ENCODE measurements at regions of chr1 and their contacts with region 1.

Region 1: GRCh38 chr1:2545759-2546514 is 10.2 kb upstream of the TNFRSF14 start:
- DNase-seq: peak; percentile 78
- H3K4me3 Mint-ChIP-seq: peak overlapping the region; percentile 75
- H3K27ac Mint-ChIP-seq: no peak overlapping the region
- H3K4me1 Mint-ChIP-seq: peaks cover 5% of the 10 kb centered on the region
- H3K27me3 Mint-ChIP-seq: no peaks in the 10 kb centered on the region
- CTCF ChIP-seq: no peak

Region 2: DNA sequence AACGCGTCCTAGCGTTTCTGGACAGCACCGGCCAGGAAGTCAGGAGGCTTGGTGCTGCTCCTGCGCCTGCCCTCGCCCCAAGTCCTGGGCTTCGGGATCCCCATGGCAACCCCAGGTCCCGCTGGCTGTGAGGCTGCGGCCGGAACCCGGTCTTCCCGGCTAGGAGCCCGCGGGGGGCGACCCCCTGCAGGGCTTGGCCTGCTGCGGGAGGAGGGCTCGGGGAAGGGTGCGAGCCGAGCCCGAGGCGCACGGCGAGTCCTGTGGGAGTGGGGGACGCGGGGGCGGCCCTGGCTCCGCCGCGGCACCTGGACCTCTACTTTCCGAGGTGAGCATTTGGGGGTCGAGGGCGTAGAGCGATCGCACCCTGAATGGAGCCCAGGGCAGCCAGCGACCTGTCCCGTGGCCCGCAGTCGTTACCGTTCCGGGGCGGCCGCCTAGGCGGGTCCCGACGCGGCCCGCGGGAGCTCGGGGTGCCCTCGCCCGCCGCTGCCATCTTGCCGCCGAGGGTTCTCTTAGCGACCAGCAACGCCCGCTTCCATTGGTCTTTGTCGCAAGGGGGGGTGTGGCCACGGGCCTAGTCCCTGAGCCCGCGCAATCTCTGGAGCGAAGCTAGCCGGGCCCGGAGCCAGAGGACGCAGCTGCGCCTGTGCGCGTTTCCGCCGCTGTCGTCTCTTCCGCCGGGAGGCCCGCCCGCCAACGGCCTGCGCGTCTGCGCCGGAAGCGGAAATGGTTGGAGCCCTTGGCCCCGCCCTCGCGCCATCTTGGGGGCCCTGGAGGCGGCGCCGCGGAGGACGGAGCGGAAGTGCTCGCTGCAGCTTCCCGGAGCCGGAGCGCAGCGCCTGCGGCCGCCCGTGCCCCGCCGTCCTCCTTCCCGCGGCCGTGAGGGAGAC is 154.7 kb before region 1 on chr1 and contains the starts of genes MORN1 and RER1:
- CTCF ChIA-PET with region 1: no interaction called
- POLR2A ChIA-PET with region 1: interaction called, 4 read pairs
- intact Hi-C with region 1: loop called (anchors 1 kb)
- DNase-seq: peak; percentile 98
- H3K4me3 Mint-ChIP-seq: peak within 1 kb of the TSS; percentile 66
- H3K27ac Mint-ChIP-seq: peak within 1 kb of the TSS; percentile 87
- H3K4me1 Mint-ChIP-seq: peaks cover 18% of the 10 kb centered on the region
- H3K27me3 Mint-ChIP-seq: no peaks in the 10 kb centered on the region
- CTCF ChIP-seq: no peak
- total RNA-seq, gene MORN1: 19.4 and 28.0 TPM in 2 replicates
- total RNA-seq, gene RER1: 172 and 224 TPM in 2 replicates

Region 3: GRCh38 chr1:2419416-2419815 is 126.5 kb before region 1 on chr1:
- CTCF ChIA-PET with region 1: interaction called, 60 read pairs
- POLR2A ChIA-PET with region 1: interaction called, 4 read pairs
- intact Hi-C with region 1: loop called (anchors 1 kb)
- DNase-seq: no peak
- H3K4me3 Mint-ChIP-seq: no peak overlapping the region
- H3K27ac Mint-ChIP-seq: no peak overlapping the region
- H3K4me1 Mint-ChIP-seq: peaks cover 3% of the 10 kb centered on the region
- H3K27me3 Mint-ChIP-seq: peaks cover 13% of the 10 kb centered on the region
- CTCF ChIP-seq: no peak

Region 4: DNA sequence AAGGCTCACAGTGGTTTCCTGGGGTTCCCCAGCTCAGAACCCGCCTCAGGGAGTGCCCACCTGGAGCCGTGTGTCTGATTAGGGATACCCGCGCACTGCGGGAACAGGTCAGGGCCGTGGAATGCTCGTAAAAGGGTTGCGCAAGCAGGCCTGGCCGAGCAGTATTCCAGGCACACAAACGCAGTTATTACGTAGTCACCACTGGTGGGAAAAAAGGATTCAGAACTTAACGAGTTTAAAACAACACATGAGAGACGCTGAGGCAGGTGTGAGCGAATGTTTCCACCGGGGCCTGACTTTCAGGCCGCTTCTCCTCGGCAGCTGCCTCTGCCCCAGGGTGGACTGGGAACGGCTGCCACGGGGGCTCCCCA is 51.6 kb before region 1 on chr1:
- CTCF ChIA-PET with region 1: interaction called, 4 read pairs
- POLR2A ChIA-PET with region 1: no interaction called
- intact Hi-C with region 1: loop called (anchors 5 kb)
- DNase-seq: peak; percentile 84
- H3K4me3 Mint-ChIP-seq: peak overlapping the region; percentile 25
- H3K27ac Mint-ChIP-seq: peak overlapping the region; percentile 23
- H3K4me1 Mint-ChIP-seq: peaks cover 13% of the 10 kb centered on the region
- H3K27me3 Mint-ChIP-seq: no peaks in the 10 kb centered on the region
- CTCF ChIP-seq: no peak

Region 5: DNA sequence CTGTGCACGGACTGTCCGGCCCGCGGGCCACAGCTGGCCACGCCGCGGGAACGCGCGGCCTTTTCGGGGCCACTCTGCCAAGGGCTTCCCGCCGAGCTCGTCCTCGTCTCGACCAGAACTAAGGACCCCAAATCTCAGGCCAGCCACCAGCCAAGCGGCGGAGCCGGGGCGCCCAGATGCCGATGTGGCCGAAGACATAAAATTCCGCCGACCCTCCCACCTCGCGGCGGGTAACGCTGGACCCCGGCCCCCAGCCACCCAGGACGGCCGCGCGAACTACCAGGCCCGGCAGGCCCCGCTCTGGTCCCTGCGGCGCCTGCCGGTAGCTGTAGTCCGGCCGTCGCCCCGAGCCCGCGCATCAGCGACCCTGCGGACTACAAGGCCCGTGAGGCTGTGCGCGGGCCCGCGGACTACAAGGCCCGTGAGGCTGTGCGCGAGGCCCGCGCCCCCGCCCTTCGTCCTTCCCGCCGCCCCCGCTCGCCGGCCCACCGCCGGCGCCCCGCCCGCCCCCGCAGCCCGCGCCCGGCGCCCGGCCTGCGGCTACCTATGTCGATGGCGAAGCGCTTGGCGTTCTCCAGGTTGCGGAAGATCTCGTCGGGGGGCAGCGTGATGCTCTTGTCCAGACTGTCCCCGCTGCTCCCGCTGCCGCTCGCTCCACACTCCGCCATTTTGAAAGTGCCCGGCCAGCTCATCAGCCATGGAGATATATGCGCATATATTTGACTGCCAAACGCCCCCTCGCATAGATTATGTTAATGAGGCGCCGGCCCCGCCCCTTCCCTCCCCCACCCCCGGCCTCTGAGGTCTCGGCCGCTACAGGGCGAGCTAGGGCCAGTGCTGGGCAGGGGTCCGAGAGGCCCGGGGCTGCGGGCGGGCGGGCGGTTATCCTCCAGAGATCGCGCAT is 19.8 kb before region 1 on chr1 and contains the start of gene PANK4:
- CTCF ChIA-PET with region 1: interaction called, 16 read pairs
- POLR2A ChIA-PET with region 1: interaction called, 36 read pairs
- intact Hi-C with region 1: loop called (anchors 1 kb)
- DNase-seq: peak; percentile 92
- H3K4me3 Mint-ChIP-seq: peak within 1 kb of the TSS; percentile 81
- H3K27ac Mint-ChIP-seq: peak within 1 kb of the TSS; percentile 92
- H3K4me1 Mint-ChIP-seq: peaks cover 31% of the 10 kb centered on the region
- H3K27me3 Mint-ChIP-seq: no peaks in the 10 kb centered on the region
- CTCF ChIP-seq: no peak
- total RNA-seq, gene PANK4: 22.1 and 25.4 TPM in 2 replicates

Region 6: DNA sequence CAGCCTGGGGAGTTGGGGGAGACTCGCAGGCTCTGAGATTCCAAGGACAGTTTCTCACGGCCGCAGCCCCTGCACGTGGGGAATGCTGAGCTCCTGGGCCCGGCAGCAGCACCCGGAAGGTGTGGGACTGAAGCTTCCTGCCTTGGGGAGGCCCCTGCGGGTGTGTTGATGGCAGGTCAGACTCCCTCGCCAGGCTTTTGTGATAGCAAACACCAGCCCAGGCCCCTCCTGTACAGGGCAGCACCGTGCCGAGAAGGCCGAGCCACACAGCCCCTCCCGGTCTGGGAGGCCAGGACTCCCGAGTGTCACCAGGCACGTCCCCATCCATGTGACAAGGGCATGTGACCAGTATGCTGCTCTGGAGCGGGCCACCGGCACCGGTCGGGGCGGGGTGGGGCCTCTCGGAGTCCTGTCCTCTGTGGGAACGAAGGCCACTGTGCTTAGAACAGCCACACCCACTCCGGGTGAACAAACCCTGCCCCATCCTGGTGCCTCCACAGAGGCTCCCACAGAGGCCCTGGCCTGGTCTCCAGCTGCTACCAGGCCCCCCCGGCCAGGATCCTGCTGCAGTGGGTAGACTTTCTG is 877.4 kb after region 1 on chr1:
- CTCF ChIA-PET with region 1: interaction called, 9 read pairs
- POLR2A ChIA-PET with region 1: interaction called, 4 read pairs
- intact Hi-C with region 1: loop called (anchors 2 kb)
- DNase-seq: no peak
- H3K4me3 Mint-ChIP-seq: no peak overlapping the region
- H3K27ac Mint-ChIP-seq: no peak overlapping the region
- H3K4me1 Mint-ChIP-seq: no peaks in the 10 kb centered on the region
- H3K27me3 Mint-ChIP-seq: peaks cover 32% of the 10 kb centered on the region
- CTCF ChIP-seq: no peak